Mammary epithelial cell (primary cell): ENCODE measurements at regions of chr1 and their contacts with region 1.

Region 1: DNA sequence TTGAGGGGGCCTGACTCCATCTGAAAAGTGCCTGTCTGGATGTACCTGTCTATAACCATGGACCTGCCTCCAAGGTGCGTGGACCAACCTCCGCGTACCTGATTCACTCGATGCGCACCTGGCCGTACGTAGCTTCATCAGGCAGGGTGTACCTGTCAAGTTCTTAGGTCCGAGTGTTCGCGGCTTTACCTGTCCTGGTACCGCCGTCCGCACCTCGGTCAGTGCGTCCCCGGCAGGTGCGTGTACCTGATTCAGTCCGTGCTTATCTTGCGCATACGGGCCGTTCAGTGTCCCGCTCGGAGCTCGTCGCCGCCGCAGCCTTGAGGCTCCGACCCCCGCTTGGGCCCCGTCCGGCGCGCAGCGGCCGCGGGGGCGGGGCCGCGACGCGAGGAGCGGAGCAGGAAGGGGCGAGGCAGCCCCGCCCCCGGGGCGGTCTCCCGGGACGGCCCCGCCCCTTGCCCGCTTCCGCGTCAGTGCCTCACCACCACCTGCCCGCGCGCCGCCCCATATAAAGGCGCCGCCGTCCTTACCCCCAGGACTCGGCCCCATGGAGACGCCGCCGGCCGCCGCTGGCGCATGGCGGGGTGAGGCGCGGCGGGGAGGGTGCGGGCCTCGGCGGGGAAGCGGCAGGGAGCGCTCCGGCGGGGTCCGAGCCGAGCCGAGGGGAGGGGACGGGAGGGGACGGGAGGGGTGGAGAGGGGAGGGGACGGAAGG is at the start of gene ZC3H12A:
- DNase-seq: peak; percentile 92
- H3K4me3 ChIP-seq: peak within 1 kb of the TSS; percentile 84 to 87 (median 85)
- H3K27ac ChIP-seq: peak within 1 kb of the TSS; percentile 96
- H3K4me1 ChIP-seq: peaks cover 62% of the 10 kb centered on the region
- H3K27me3 ChIP-seq: no peaks in the 10 kb centered on the region
- CTCF ChIP-seq: no peak
- total RNA-seq, gene ZC3H12A: 22.0 to 37.9 TPM

Region 2: DNA sequence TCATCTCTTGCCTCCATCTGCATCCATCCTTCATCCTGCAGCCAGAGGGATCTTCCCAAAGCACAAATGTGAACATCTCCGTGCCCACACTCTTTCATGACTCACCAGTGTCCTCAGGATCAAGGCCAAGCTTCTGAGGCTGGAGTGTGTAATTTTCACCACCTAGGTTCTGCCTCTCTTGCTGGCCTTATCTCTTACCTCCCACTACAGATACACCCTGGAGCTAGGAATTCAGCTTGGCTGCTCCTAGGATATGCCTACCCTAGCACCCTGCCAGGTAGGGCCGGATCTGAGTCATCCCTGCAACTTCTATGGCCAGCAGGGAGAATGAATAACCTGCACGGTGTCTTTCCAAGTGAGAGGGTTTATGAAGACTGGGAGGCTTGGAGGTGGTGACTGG is 782.8 kb before region 1 on chr1:
- CTCF ChIA-PET with region 1: no interaction called
- dilution Hi-C with region 1: no loop called
- in situ Hi-C with region 1: no loop called
- intact Hi-C with region 1: no loop called
- DNase-seq: peak; percentile 46
- H3K4me3 ChIP-seq: no peak overlapping the region
- H3K27ac ChIP-seq: no peak overlapping the region
- H3K4me1 ChIP-seq: peaks cover 4% of the 10 kb centered on the region
- H3K27me3 ChIP-seq: no peaks in the 10 kb centered on the region
- CTCF ChIP-seq: no peak

Region 3: GRCh38 chr1:37391211-37392011 is 82.8 kb before region 1 on chr1:
- CTCF ChIA-PET with region 1: no interaction called
- dilution Hi-C with region 1: no loop called
- in situ Hi-C with region 1: no loop called
- intact Hi-C with region 1: no loop called
- DNase-seq: no peak
- H3K4me3 ChIP-seq: no peak overlapping the region
- H3K27ac ChIP-seq: no peak overlapping the region
- H3K4me1 ChIP-seq: no peaks in the 10 kb centered on the region
- H3K27me3 ChIP-seq: no peaks in the 10 kb centered on the region
- CTCF ChIP-seq: peak in 1 of 2 donors; percentile 23

Region 4: DNA sequence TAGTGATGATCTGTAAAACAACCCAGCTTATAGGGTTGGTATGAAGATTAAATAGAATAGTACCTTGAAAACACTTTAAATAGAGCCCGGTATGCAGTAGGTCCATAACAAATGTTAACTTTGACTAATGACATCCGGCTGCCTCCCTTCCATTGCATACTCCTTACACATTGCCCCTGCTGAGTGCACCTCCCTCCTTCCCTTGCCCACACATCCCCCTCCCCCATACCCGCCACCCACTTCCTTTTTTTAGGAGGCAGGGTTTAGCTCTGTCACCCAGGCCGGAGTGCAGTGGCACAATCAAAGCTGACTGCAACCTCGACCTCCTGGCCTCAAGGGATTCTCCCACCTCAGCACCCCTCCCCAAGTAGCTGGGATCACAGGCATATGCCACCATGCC is 24.3 kb before region 1 on chr1:
- CTCF ChIA-PET with region 1: interaction called, 3 read pairs
- dilution Hi-C with region 1: no loop called
- in situ Hi-C with region 1: no loop called
- intact Hi-C with region 1: loop called (anchors 2 kb)
- DNase-seq: no peak
- H3K4me3 ChIP-seq: no peak overlapping the region
- H3K27ac ChIP-seq: no peak overlapping the region
- H3K4me1 ChIP-seq: peaks cover 25% of the 10 kb centered on the region
- H3K27me3 ChIP-seq: no peaks in the 10 kb centered on the region
- CTCF ChIP-seq: no peak

Region 5: DNA sequence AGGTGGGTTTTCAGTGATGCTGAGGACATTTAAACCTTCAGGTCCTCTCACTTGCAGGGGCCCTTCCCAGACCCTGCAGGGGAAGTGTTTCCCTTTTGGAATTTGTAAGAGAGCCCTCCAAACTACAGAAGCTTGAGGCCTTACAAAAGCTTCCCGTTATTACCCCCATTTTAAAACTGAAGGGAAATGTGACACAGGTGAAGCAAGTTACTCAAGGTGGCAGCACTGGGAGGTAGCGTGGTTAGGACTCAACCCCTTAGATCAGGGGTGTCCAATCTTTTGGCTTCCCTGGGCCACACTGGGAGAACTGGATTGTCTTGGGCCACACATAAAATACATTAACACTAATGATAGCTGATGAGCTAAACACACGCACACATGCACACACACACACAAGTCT is 15.7 kb before region 1 on chr1:
- CTCF ChIA-PET with region 1: interaction called, 15 read pairs
- dilution Hi-C with region 1: no loop called
- in situ Hi-C with region 1: no loop called
- intact Hi-C with region 1: loop called (anchors 2 kb)
- DNase-seq: no peak
- H3K4me3 ChIP-seq: no peak overlapping the region
- H3K27ac ChIP-seq: no peak overlapping the region
- H3K4me1 ChIP-seq: peaks cover 10% of the 10 kb centered on the region
- H3K27me3 ChIP-seq: no peaks in the 10 kb centered on the region
- CTCF ChIP-seq: peak in 1 of 2 donors; percentile 25

Region 6: GRCh38 chr1:37486680-37487618 is 12.7 kb after region 1 on chr1:
- CTCF ChIA-PET with region 1: interaction called, 3 read pairs
- dilution Hi-C with region 1: no loop called
- in situ Hi-C with region 1: no loop called
- intact Hi-C with region 1: loop called (anchors 1 kb)
- DNase-seq: peak; percentile 57
- H3K4me3 ChIP-seq: no peak overlapping the region
- H3K27ac ChIP-seq: peak overlapping the region; percentile 39
- H3K4me1 ChIP-seq: peaks cover 39% of the 10 kb centered on the region
- H3K27me3 ChIP-seq: no peaks in the 10 kb centered on the region
- CTCF ChIP-seq: peak; percentile 97 to 99

Region 7: DNA sequence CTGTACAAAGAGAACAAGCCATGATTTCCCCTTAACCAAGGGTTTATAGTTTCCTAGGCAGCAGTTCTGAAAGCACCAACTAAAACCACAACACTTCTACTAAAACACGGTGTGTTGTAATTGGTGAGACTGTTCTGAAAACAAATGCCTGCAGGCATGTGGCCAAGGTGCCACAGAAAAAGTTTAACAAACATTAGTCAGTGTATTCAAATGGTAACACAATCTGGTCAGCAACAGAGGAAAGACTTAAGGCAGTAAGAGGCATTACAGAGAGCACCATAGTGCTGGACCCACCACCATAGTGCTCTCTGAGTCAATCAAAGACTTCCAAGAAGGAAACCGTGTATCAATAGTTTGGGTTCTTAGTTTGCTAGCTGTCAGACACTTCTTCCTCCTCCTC is 63.2 kb after region 1 on chr1:
- CTCF ChIA-PET with region 1: no interaction called
- dilution Hi-C with region 1: no loop called
- in situ Hi-C with region 1: no loop called
- intact Hi-C with region 1: loop called (anchors 2 kb)
- DNase-seq: peak; percentile 84
- H3K4me3 ChIP-seq: no peak overlapping the region
- H3K27ac ChIP-seq: peak overlapping the region; percentile 45
- H3K4me1 ChIP-seq: peaks cover 28% of the 10 kb centered on the region
- H3K27me3 ChIP-seq: no peaks in the 10 kb centered on the region
- CTCF ChIP-seq: no peak

Region 8: GRCh38 chr1:37622131-37622530 is 147.9 kb after region 1 on chr1:
- CTCF ChIA-PET with region 1: no interaction called
- dilution Hi-C with region 1: no loop called
- in situ Hi-C with region 1: no loop called
- intact Hi-C with region 1: no loop called
- DNase-seq: no peak
- H3K4me3 ChIP-seq: no peak overlapping the region
- H3K27ac ChIP-seq: no peak overlapping the region
- H3K4me1 ChIP-seq: no peaks in the 10 kb centered on the region
- H3K27me3 ChIP-seq: peaks cover 5% of the 10 kb centered on the region
- CTCF ChIP-seq: no peak

Region 9: GRCh38 chr1:37859507-37860345 is 385.5 kb after region 1 on chr1 and contains the start of gene MTF1:
- CTCF ChIA-PET with region 1: no interaction called
- dilution Hi-C with region 1: no loop called
- in situ Hi-C with region 1: no loop called
- intact Hi-C with region 1: loop called (anchors 2 kb)
- DNase-seq: peak; percentile 97
- H3K4me3 ChIP-seq: peak within 1 kb of the TSS; percentile 69 to 83 (median 78)
- H3K27ac ChIP-seq: peak within 1 kb of the TSS; percentile 89
- H3K4me1 ChIP-seq: peaks cover 29% of the 10 kb centered on the region
- H3K27me3 ChIP-seq: no peaks in the 10 kb centered on the region
- CTCF ChIP-seq: peak; percentile 62 to 93
- total RNA-seq, gene MTF1: 4.5 to 28.7 TPM

Region 10: DNA sequence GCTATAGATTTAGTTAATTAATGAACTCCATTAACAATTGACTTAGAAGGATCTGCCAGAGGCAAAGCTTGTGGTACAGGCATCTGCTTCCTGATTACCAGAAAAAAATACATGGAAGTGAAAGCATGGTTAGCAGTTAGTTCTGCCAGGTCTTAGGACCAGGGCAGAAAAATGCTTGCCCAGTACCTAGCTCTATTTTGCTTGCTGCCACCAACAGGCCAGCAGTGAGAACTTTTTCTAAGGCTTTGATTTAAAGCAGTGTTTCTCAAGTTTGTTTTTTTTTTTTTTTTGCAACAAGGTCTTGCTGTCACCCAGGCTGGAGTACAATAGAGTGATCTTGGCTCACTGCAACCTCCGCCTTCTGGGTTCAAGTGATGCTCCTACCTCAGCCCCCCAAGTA is 401.6 kb after region 1 on chr1:
- CTCF ChIA-PET with region 1: interaction called, 15 read pairs
- dilution Hi-C with region 1: no loop called
- in situ Hi-C with region 1: no loop called
- intact Hi-C with region 1: no loop called
- DNase-seq: peak; percentile 38
- H3K4me3 ChIP-seq: no peak overlapping the region
- H3K27ac ChIP-seq: no peak overlapping the region
- H3K4me1 ChIP-seq: no peaks in the 10 kb centered on the region
- H3K27me3 ChIP-seq: no peaks in the 10 kb centered on the region
- CTCF ChIP-seq: peak; percentile 39 to 61